Esophagus muscularis mucosa (tissue), 4 donors: ENCODE measurements at regions of chr10 and their contacts with region 1.

Region 1: DNA sequence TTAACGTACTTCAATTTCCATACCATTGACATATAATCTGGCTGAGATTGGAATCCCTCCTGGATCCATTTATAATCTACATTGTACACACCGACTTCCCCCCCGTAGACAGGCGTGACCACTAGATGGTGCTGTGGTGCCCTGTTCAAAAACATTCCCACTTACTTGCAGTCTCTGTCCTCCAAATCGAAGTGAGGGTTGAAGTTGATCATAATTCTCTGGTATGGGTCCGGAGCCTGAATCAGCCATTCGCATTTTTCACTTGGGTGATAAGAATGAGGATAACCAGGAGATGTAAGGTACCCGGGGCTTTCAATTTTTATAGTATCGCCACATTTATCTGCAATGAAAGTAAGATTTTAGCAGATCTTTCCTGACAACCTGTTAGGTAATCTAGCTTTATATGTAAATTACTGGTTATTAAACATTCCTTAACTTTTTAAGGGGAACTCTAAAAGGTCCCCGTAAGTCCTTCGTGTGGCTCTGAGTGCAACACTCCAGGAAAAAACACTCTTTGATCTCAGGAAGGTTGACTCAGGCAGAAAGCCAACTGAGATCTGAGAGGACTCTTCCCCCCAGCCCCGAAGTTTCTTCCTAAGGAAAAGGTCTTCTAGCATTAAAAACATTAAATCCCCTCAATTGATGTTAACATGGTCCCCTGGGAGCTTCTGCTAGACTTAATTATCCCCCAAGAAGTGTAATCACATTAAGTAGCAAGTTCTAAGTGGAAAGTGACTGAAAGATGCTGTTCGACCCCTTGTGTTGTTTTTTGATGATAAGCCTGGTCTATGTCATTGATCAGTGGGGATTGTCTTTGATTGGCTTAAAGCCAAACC is 3.7 kb downstream of the NRP1 start:
- DNase-seq: no peak
- H3K4me3 ChIP-seq: peak overlapping the region; percentile 74 to 95 (median 84)
- H3K27ac ChIP-seq: peak overlapping the region; percentile 90 to 95 (median 92)
- H3K4me1 ChIP-seq: peaks cover 35 to 71% (median 70%) of the 10 kb centered on the region in 4 donors
- H3K27me3 ChIP-seq: no peaks in the 10 kb centered on the region
- CTCF ChIP-seq: peak; percentile 86 to 90 (median 89)
- EP300 ChIP-seq: no peak
- POLR2A ChIP-seq: no peak

Region 2: GRCh38 chr10:33193057-33193700 is 137.6 kb before region 1 on chr10:
- intact Hi-C with region 1: loop called (anchors 2 kb)
- DNase-seq: no peak
- H3K4me3 ChIP-seq: no peak overlapping the region
- H3K27ac ChIP-seq: peak overlapping the region; percentile 4 to 53 (median 22)
- H3K4me1 ChIP-seq: peaks cover 20 to 42% (median 40%) of the 10 kb centered on the region in 4 donors
- H3K27me3 ChIP-seq: no peaks in the 10 kb centered on the region
- CTCF ChIP-seq: peak; percentile 81 to 86 (median 81)
- EP300 ChIP-seq: no peak
- POLR2A ChIP-seq: no peak

Region 3: DNA sequence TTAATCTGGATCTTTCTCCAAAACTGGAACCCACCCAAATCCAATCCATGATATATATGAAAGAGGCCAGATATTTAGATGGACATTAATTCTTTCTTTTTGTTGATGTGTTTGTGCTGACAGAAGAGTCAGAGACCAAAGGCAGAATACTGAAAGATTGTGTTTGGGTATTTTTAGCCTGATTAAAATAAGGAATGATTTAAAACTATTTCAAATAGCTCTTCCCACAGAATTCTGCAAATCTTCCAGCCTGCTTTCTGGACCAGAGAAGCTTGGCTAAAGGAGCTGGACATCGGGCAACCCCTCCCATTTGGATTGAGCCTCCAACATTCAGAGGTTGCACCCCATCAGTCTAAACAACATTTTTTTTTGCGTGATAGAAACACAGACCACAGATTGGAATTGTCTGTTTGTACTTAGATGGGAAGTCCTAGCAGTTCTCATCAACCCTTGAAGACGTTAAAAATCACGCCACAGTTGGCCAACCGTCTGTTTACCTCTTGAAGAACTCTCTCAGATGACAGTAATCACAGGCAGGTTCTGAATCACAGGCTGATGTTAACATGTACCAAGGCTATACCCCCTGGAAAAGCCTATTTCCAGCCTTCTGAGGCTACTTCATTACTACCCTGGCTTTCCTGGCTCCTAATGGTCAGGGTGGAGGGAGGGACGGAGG is 158.9 kb after region 1 on chr10:
- intact Hi-C with region 1: loop called (anchors 5 kb)
- DNase-seq: no peak
- H3K4me3 ChIP-seq: no peak overlapping the region
- H3K27ac ChIP-seq: peak overlapping the region; percentile 35 to 65 (median 48)
- H3K4me1 ChIP-seq: peaks cover 6 to 72% (median 61%) of the 10 kb centered on the region in 4 donors
- H3K27me3 ChIP-seq: no peaks in the 10 kb centered on the region
- CTCF ChIP-seq: no peak
- EP300 ChIP-seq: no peak
- POLR2A ChIP-seq: no peak

Region 4: DNA sequence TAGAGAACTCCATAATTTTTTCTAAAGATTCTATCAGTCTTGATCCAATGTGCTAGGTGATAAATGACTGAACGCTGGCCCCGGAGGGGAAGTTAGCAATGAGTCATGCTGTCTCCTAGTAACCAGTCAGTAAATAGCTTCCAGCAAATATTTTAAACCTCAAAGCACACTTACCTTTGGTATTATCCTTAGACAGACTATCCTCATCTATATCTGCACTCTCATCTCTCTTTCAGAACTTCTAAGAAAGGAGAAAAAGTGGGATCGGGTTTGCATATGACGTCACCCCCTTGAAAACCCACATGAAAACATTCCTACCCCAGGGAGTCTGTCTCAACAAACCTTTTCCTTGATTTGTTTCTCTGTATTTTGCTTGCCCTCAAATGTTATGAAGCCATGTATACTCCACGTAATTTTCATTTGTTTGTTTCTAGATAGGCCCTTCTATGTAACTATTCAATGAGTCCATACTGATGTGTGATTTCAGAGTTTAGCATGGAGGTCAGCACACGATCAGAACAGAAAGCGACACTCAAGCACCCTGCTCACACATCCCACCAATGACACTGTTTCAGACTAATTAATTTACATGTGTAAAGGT is 178.6 kb after region 1 on chr10:
- intact Hi-C with region 1: loop called (anchors 5 kb)
- DNase-seq: peak; percentile 17
- H3K4me3 ChIP-seq: peak overlapping the region in 1 of 4 donors; percentile 6
- H3K27ac ChIP-seq: peak overlapping the region; percentile 63 to 79 (median 71)
- H3K4me1 ChIP-seq: peaks cover 0 to 43% (median 34%) of the 10 kb centered on the region in 4 donors
- H3K27me3 ChIP-seq: no peaks in the 10 kb centered on the region
- CTCF ChIP-seq: no peak
- EP300 ChIP-seq: no peak
- POLR2A ChIP-seq: no peak

Region 5: DNA sequence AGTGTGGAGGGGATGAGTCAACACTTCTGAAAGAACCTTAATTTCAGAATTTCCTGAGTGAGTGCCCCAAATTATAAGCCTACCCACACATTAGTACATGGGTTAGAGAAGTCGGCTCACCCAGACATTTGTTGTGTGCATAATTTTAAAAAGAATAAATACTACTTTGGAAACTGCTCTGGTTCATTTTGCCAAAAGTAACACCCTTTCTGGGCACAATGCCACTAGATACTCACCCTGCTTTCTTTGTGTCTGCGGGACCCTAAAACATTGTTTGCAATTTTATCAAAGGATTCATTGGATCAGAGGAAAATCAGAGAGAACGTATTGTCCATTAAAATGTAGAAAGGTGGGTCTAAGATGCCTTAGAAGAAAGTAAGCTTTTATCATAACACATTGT is 249.2 kb after region 1 on chr10:
- intact Hi-C with region 1: no loop called
- DNase-seq: no peak
- H3K4me3 ChIP-seq: no peak overlapping the region
- H3K27ac ChIP-seq: no peak overlapping the region
- H3K4me1 ChIP-seq: no peaks in the 10 kb centered on the region
- H3K27me3 ChIP-seq: no peaks in the 10 kb centered on the region
- CTCF ChIP-seq: no peak
- EP300 ChIP-seq: no peak
- POLR2A ChIP-seq: no peak

Region 6: DNA sequence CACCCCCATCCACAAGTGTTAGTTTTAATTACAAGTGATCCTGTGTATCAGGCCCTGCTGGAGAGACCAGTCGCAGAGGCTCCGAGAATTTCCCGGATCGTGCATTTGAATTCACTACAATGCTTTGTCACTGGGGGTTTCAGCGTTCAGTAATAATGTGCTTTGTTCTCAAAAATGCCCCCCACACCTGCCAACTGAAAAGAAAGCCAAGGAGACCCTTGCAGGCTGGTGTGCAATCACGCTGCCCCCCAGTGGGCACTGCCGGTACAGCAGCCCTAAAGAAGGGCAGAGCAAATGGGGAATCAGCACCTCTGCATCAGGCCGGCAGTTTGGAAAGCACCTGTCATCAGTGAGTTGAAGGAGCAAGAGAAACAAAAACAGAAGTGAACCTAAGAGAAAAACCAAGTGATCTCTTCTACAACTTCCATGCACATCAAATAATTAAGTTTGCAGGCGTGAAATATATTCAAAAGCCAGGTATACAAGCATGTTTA is 1306.7 kb after region 1 on chr10:
- intact Hi-C with region 1: loop called (anchors 5 kb)
- DNase-seq: no peak
- H3K4me3 ChIP-seq: no peak overlapping the region
- H3K27ac ChIP-seq: no peak overlapping the region
- H3K4me1 ChIP-seq: peaks cover 13 to 65% (median 29%) of the 10 kb centered on the region in 4 donors
- H3K27me3 ChIP-seq: no peaks in the 10 kb centered on the region
- CTCF ChIP-seq: peak; percentile 86 to 97 (median 94)
- EP300 ChIP-seq: no peak
- POLR2A ChIP-seq: no peak